Mammary epithelial cell (primary cell): ENCODE measurements at regions of chr5 and their contacts with region 1.

Region 1: GRCh38 chr5:136686192-136686872 is 321.0 kb upstream of the TRPC7 start:
- DNase-seq: peak; percentile 56
- H3K4me3 ChIP-seq: no peak overlapping the region
- H3K27ac ChIP-seq: no peak overlapping the region
- H3K4me1 ChIP-seq: no peaks in the 10 kb centered on the region
- H3K27me3 ChIP-seq: no peaks in the 10 kb centered on the region
- CTCF ChIP-seq: peak; percentile 62 to 71

Region 2: GRCh38 chr5:136249678-136250266 is 436.6 kb before region 1 on chr5:
- CTCF ChIA-PET with region 1: no interaction called
- dilution Hi-C with region 1: no loop called
- in situ Hi-C with region 1: loop called in 1 of 2 experiments (anchors 10 kb)
- intact Hi-C with region 1: loop called (anchors 1 kb)
- DNase-seq: peak; percentile 37
- H3K4me3 ChIP-seq: no peak overlapping the region
- H3K27ac ChIP-seq: no peak overlapping the region
- H3K4me1 ChIP-seq: peaks cover 10% of the 10 kb centered on the region
- H3K27me3 ChIP-seq: no peaks in the 10 kb centered on the region
- CTCF ChIP-seq: peak; percentile 97 to 98